Naive thymus-derived CD4-positive, alpha-beta T cell (primary cell): ENCODE measurements at regions of chr12 and their contacts with region 1.

Region 1: DNA sequence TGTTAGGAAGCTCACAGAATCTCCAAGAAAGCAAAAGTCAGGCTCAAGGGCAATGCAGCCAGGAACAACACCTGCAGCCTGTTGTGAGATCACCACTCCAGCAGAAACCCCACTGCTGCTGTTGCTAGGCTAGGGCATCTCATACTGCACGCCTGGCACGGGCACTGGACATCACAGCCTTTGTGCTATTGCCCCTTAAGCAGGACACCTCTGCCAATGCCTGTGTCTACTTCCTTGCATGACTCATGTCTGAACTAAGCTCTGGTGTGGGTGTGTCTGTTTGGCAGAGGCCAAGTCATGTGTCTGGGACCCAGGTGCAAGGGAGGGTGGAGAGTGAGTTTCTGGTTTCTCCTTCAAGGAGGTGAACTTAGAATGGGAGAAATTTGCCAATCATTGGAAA is 10.0 kb upstream of the DDX47 start:
- DNase-seq: peak in 3 of 9 donors; percentile 11 to 46 (median 35)
- ATAC-seq: peak; percentile 28
- H3K4me3 ChIP-seq: no peak overlapping the region
- H3K4me3 Mint-ChIP-seq: peak overlapping the region in 3 of 10 donors; percentile 31 to 77 (median 31)
- H3K27ac ChIP-seq: no peak overlapping the region
- H3K27ac Mint-ChIP-seq: peak overlapping the region; percentile 16 to 98 (median 73)
- H3K4me1 ChIP-seq: peaks cover 13 to 17% of the 10 kb centered on the region in 2 donors
- H3K4me1 Mint-ChIP-seq: peaks cover 25 to 64% (median 55%) of the 10 kb centered on the region in 7 donors
- H3K27me3 ChIP-seq: no peaks in the 10 kb centered on the region
- H3K27me3 Mint-ChIP-seq: no peaks in the 10 kb centered on the region

Region 2: DNA sequence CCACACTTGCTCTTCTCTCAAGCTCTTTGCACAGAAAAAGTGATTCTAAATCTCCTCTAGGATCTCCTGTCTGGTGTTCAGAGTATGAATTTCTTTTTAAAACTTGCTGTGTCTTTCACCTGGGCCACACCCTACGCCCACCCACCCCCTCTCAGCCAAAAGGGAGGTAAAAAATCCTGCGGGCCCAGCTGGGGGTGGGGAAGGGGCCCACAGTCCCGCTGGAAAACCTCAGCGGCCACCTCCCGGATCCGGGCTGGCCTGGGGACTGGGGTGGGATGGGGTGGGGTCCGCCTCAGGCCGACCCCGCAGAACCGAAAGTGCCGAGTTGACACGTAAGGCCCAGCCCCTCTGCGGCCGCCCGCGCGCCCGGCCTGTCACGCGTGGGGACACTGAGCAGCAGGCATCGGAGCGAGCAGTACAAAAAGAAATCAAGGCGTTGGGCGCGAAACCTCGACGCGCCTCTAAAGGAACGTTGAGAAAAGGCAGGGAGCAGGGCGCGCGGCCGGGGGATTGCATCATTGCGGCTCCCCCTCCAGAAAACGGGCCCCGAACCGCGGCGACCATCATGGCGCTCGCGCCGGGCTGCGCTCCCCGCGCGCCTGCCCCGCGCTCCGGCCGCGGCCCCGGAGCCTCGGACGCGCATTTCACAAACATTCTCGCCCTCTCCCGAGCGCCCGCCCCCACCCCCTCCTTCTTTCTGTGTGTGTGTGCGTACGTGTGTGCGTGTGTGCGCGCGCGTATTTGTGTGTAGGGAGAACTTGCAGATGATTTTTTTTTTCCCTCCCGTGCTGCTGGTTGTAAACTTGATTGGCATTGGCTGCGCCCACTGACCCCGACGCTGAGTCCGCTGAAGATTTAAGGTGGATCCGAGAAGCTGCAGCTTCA is 78.3 kb before region 1 on chr12:
- CTCF ChIA-PET with region 1: no interaction called
- POLR2A ChIA-PET with region 1: interaction called, 8 read pairs
- intact Hi-C with region 1: loop called (anchors 1 to 5 kb)
- DNase-seq: peak; percentile 78 to 97 (median 92)
- ATAC-seq: peak; percentile 77
- H3K4me3 ChIP-seq: peak overlapping the region; percentile 53
- H3K4me3 Mint-ChIP-seq: peak overlapping the region; percentile 87 to 98 (median 94)
- H3K27ac ChIP-seq: peak overlapping the region; percentile 99
- H3K27ac Mint-ChIP-seq: peak overlapping the region; percentile 96 to 99 (median 97)
- H3K4me1 ChIP-seq: peaks cover 28% of the 10 kb centered on the region in 2 donors
- H3K4me1 Mint-ChIP-seq: peaks cover 23 to 64% (median 56%) of the 10 kb centered on the region in 7 donors
- H3K27me3 ChIP-seq: no peaks in the 10 kb centered on the region
- H3K27me3 Mint-ChIP-seq: peaks cover 0 to 7% (median 0%) of the 10 kb centered on the region in 5 donors

Region 3: GRCh38 chr12:12776261-12776660 is 26.9 kb before region 1 on chr12:
- CTCF ChIA-PET with region 1: no interaction called
- POLR2A ChIA-PET with region 1: no interaction called
- intact Hi-C with region 1: no loop called
- DNase-seq: no peak
- ATAC-seq: no peak
- H3K4me3 ChIP-seq: no peak overlapping the region
- H3K4me3 Mint-ChIP-seq: no peak overlapping the region
- H3K27ac ChIP-seq: no peak overlapping the region
- H3K27ac Mint-ChIP-seq: no peak overlapping the region
- H3K4me1 ChIP-seq: no peaks in the 10 kb centered on the region
- H3K4me1 Mint-ChIP-seq: peaks cover 0 to 5% (median 0%) of the 10 kb centered on the region in 7 donors
- H3K27me3 ChIP-seq: no peaks in the 10 kb centered on the region
- H3K27me3 Mint-ChIP-seq: no peaks in the 10 kb centered on the region

Region 4: GRCh38 chr12:12813120-12814101 is 10.2 kb after region 1 on chr12 and contains the start of gene DDX47:
- CTCF ChIA-PET with region 1: interaction called, 6 read pairs
- POLR2A ChIA-PET with region 1: interaction called, 10 read pairs
- intact Hi-C with region 1: loop called in 1 of 2 experiments (anchors 1 kb)
- DNase-seq: peak; percentile 91 to 99 (median 96)
- ATAC-seq: peak; percentile 97
- H3K4me3 ChIP-seq: peak within 1 kb of the TSS; percentile 96
- H3K4me3 Mint-ChIP-seq: peak within 1 kb of the TSS; percentile 89 to 99 (median 96)
- H3K27ac ChIP-seq: peak within 1 kb of the TSS; percentile 99
- H3K27ac Mint-ChIP-seq: peak within 1 kb of the TSS; percentile 84 to 99 (median 97)
- H3K4me1 ChIP-seq: peaks cover 28 to 41% of the 10 kb centered on the region in 2 donors
- H3K4me1 Mint-ChIP-seq: peaks cover 36 to 84% (median 69%) of the 10 kb centered on the region in 7 donors
- H3K27me3 ChIP-seq: no peaks in the 10 kb centered on the region
- H3K27me3 Mint-ChIP-seq: no peaks in the 10 kb centered on the region
- total RNA-seq, gene DDX47: 71.6 to 154 (median 75.5) TPM

Region 5: DNA sequence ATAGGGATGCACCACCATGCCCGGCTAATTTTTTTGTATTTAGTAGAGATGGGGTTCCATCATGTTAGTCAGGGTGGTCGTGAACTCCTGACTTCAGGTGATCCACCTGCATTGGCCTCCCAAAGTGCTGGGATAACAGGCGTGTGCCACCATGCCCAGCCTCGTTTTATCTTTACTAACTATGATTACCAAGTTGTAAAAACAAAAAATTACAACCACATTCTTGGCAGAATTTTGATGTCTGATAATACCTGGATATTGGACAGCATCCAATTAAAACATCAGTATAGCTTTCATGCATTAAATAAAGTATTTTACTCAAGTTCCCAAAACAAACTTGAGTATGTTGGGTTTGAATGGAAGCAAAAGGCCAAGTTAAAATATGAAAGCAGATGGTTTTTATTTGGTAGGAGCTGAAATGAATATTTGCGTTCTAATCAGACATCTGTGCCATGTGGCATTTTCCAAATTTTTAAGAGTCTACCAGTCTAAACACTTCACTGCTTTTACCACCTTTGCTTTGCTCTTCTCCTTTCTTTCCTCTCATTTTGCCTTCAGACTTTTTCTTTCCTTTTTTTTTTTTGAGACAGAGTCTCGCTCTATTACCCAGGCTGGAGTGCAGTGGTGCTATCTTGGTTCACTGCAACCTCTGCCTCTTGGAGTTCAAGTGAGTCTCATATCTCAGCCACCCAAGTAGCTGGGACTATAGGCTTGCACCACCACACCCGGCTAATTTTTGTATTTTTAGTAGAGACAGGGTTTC is 42.0 kb after region 1 on chr12:
- CTCF ChIA-PET with region 1: no interaction called
- POLR2A ChIA-PET with region 1: interaction called, 4 read pairs
- intact Hi-C with region 1: loop called in 1 of 2 experiments (anchors 2 kb)
- DNase-seq: no peak
- ATAC-seq: no peak
- H3K4me3 ChIP-seq: no peak overlapping the region
- H3K4me3 Mint-ChIP-seq: peak overlapping the region in 3 of 10 donors; percentile 32 to 56 (median 53)
- H3K27ac ChIP-seq: no peak overlapping the region
- H3K27ac Mint-ChIP-seq: peak overlapping the region in 7 of 9 donors; percentile 38 to 87 (median 78)
- H3K4me1 ChIP-seq: peaks cover 0 to 31% of the 10 kb centered on the region in 2 donors
- H3K4me1 Mint-ChIP-seq: peaks cover 14 to 50% (median 36%) of the 10 kb centered on the region in 7 donors
- H3K27me3 ChIP-seq: no peaks in the 10 kb centered on the region
- H3K27me3 Mint-ChIP-seq: no peaks in the 10 kb centered on the region